Psoas muscle (tissue), 8 donors: ENCODE measurements at regions of chr11 and their contacts with region 1.

Region 1: DNA sequence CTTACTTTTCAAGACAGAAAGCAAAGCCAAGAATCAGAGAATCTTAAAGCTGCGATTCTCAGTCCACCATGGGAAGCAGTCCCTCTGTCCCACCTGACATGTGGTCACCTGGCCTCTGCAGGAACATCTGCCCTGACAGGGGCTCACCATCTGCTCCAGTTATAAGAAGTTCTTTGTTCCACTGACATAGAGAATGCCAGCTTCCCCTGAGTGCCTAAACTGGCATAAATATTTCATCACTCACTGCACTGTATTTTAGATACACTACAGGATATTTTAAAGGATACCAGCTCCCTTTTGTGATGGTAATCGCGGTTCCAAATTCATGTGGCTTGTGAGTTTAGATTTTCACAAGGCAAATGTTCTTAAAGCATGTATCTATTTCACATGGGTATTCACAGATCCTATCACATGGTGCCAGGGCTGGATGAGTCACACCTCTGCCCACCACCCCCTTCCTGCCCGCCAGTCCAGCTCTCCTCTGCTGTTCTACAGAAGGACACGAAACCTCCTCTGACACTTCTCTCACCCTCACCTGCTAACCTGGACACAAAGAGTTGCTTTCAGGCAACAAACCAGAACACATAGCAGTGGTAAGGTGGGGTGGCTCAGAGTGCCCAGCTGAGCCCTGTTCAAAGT is 105.5 kb downstream of the KCNC1 start:
- DNase-seq: peak; percentile 41 to 79
- ATAC-seq: peak; percentile 73 to 86 (median 78)
- H3K4me3 ChIP-seq: no peak overlapping the region
- H3K27ac ChIP-seq: peak overlapping the region; percentile 89
- H3K4me1 ChIP-seq: peaks cover 37% of the 10 kb centered on the region
- H3K27me3 ChIP-seq: no peaks in the 10 kb centered on the region
- CTCF ChIP-seq: no peak

Region 2: DNA sequence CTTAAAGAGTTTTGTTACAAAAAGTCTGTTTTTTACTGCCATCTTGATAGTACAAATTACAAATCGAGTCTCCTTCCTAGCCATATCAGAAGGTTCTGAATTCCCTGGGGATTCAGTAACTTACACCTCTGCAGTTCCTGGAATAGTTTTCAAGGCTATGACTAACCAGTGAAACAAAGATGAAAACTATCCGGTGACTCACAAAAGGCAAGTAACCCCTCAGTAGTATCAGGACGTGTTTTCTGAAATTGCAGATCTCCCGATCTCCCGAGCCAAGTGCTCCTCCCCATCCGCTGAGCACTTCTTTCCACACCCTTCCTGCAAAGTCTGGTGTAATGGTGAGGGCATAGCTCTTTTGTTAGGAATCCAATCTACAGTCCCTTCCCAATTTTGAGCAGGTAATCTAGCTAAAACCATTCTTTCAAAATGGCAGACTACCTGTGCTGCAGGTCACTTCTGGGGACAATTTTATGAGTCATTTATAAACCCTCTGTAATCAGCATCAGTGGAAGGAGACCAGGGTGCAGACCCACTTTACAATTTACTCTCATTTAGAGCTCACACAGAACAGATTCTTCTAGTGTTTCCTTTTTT is 1392.9 kb after region 1 on chr11:
- intact Hi-C with region 1: loop called in 1 of 2 experiments (anchors 5 kb)
- DNase-seq: no peak
- ATAC-seq: peak; percentile 67 to 84 (median 78)
- H3K4me3 ChIP-seq: no peak overlapping the region
- H3K27ac ChIP-seq: peak overlapping the region; percentile 79
- H3K4me1 ChIP-seq: peaks cover 12% of the 10 kb centered on the region
- H3K27me3 ChIP-seq: no peaks in the 10 kb centered on the region
- CTCF ChIP-seq: no peak